WTC11 (cell line): ENCODE measurements at regions of chr3 and their contacts with region 1.

Region 1: DNA sequence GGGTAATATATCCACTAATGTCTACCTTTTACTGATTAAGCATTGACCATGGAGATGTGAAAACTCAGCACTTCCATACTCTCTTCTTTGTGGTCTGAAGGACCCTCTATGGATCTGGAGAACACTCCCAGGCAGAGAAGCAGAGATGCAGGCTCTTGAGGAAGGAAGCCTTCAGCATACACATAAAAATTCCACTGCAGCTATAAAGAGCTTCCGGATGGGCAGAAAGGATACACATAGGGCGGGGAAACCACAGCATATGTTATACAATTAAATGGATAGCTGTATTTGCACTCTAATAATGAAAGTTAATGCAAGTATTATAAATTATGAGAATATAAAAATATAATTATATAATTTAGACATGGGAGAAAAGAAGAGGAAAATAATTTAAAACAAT is 1258.2 kb upstream of the ALCAM start:
- DNase-seq: no peak
- ATAC-seq: no peak
- H3K4me3 Mint-ChIP-seq: no peak overlapping the region
- H3K27ac Mint-ChIP-seq: no peak overlapping the region
- H3K4me1 Mint-ChIP-seq: peaks cover 15% of the 10 kb centered on the region
- H3K27me3 Mint-ChIP-seq: 0 out of 2 replicates have a peak, but pooled peaks cover under 1% of the 10 kb centered on the region
- CTCF ChIP-seq: no peak

Region 2: GRCh38 chr3:105837143-105837740 is 1728.7 kb after region 1 on chr3:
- CTCF ChIA-PET with region 1: no interaction called
- POLR2A ChIA-PET with region 1: interaction called, 11 read pairs
- DNase-seq: no peak
- ATAC-seq: no peak
- H3K4me3 Mint-ChIP-seq: no peak overlapping the region
- H3K27ac Mint-ChIP-seq: no peak overlapping the region
- H3K4me1 Mint-ChIP-seq: peaks cover 12% of the 10 kb centered on the region
- H3K27me3 Mint-ChIP-seq: no peaks in the 10 kb centered on the region
- CTCF ChIP-seq: no peak